ENCODE measurements at regions of chr4 and their contacts with region 1.

Region 1: DNA sequence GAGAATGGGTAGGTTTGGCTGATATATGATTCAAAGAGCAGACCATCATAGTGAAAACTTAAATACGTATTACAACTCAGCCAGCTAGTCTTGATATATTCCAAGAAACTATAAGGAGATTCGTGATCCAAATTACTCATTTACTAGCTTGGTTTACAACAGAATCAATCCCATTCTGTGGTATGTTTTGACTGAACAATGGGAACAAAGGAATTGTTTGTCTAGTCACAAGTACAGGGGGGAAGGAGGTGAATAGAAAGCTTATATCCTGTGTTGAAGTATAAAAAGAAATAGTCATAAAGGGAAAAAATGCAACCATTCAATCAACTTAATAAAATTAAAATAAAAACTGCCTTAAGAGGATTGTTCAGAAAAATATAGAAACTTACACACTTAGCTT is 17.0 kb downstream of the C4orf54 start:
- DNase-seq: no peak
- ATAC-seq: no peak
- H3K4me3 ChIP-seq: no peak overlapping the region
- H3K27ac ChIP-seq: no peak overlapping the region
- H3K4me1 ChIP-seq: no peaks in the 10 kb centered on the region
- H3K27me3 ChIP-seq: peaks cover 0 to 5% of the 10 kb centered on the region in 2 experiments; a peak in 1 of 4 replicates
- CTCF ChIP-seq: no peak
- EP300 ChIP-seq: no peak
- POLR2A ChIP-seq: no peak
- RAD21 ChIP-seq: no peak

Region 2: GRCh38 chr4:99753931-99754330 is 113.3 kb after region 1 on chr4:
- CTCF ChIA-PET with region 1: no interaction called
- POLR2A ChIA-PET with region 1: interaction called, 12 read pairs
- RAD21 ChIA-PET with region 1: no interaction called
- SMC1A ChIA-PET with region 1: no interaction called
- in situ Hi-C with region 1: no loop called
- intact Hi-C with region 1: no loop called
- DNase-seq: no peak
- ATAC-seq: no peak
- H3K4me3 ChIP-seq: no peak overlapping the region
- H3K27ac ChIP-seq: no peak overlapping the region
- H3K4me1 ChIP-seq: no peaks in the 10 kb centered on the region
- H3K27me3 ChIP-seq: no peaks in the 10 kb centered on the region
- CTCF ChIP-seq: no peak
- EP300 ChIP-seq: no peak
- POLR2A ChIP-seq: no peak
- RAD21 ChIP-seq: no peak

Measured in GM12878 (cell line).